Activated CD4-positive, alpha-beta T cell treated with anti-CD3 and anti-CD28 coated beads, Interleukin-2, amount 10 ng/mL, durations not matched to agents 24 days and 14 days (primary cell): ENCODE measurements at regions of chr6 and their contacts with region 1.

Region 1: DNA sequence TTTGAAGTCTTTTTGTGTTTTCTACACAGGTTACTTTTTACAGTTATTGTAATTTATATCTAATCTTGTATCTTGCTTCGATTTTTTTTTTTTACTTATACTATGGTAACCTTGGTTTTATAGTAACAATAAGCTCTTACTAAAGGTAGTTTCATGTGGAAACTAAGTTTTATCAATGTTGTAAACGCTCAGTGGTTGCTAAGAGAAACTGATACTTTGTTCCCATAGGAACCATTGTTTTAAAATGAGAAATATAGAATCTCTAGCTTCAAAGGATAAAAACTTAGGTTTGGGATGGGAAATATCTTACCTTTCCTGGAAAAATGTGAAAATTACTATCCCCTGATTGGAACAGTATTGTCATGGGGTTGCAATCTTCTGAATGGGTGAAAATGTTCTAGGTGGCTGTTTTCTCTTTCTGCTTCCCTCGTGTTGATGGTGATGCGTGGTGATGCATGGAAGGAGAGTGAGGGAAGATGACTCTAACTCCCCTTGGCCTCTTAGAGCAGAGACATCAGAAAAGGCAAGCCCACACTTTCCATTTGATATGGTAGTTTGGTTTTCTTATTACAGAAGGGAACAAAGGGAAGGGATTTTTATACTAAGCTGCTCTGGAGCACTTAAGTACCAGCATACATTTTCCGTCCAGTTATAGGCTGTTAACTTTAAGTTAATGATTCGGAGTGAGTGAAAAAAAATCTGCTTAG is 23.5 kb upstream of the BACH2 start:
- DNase-seq: no peak
- H3K4me3 Mint-ChIP-seq: no peak overlapping the region
- H3K27ac Mint-ChIP-seq: peak overlapping the region; percentile 77
- H3K4me1 Mint-ChIP-seq: peaks cover 15% of the 10 kb centered on the region
- H3K27me3 Mint-ChIP-seq: peaks cover 2% of the 10 kb centered on the region

Region 2: DNA sequence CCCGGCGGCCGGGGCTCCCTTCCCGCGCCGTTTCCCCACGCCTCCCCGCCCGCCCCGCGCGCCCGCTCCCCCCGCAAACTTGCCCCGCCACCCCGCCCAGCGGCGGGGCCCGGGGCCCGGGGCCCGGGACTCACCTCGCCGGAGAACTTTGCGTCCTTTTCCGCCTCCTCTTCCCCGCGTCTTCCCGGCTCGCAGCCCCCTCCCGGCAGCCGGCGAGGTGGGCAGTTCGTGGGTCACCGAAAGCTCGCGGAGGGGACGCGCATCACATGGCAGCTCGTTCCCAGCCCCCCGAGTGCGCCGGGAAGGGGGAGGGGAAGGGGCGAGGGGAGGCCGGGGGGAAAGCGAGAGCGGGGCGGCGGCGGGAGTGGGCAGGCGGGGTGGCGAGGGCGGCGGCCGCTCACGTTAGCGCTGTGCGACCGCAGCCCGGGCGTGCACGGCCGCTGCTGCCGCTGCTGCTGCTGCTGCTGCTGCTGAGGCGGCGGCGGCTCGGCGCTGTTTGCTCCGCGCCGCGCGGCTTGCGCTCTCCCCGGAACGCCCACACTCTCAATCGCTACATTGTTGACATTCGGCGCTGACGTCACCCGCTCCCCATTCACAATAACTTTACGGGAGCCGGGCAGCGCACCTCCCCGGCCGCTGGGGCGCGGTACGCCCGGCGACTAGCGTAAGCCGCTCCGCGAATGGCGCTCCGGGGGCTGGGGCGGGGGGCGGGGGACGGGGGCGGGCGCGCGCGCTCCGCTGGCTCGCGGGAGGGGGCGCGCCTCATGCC is 23.6 kb before region 1 on chr6 and contains the start of gene BACH2:
- intact Hi-C with region 1: loop called (anchors 1 kb)
- DNase-seq: peak; percentile 97
- H3K4me3 Mint-ChIP-seq: peak within 1 kb of the TSS; percentile 94
- H3K27ac Mint-ChIP-seq: peak within 1 kb of the TSS; percentile 95
- H3K4me1 Mint-ChIP-seq: peaks cover 40% of the 10 kb centered on the region
- H3K27me3 Mint-ChIP-seq: peaks cover 23% of the 10 kb centered on the region
- total RNA-seq, gene BACH2: 69.0 and 69.2 TPM in 2 replicates

Region 3: DNA sequence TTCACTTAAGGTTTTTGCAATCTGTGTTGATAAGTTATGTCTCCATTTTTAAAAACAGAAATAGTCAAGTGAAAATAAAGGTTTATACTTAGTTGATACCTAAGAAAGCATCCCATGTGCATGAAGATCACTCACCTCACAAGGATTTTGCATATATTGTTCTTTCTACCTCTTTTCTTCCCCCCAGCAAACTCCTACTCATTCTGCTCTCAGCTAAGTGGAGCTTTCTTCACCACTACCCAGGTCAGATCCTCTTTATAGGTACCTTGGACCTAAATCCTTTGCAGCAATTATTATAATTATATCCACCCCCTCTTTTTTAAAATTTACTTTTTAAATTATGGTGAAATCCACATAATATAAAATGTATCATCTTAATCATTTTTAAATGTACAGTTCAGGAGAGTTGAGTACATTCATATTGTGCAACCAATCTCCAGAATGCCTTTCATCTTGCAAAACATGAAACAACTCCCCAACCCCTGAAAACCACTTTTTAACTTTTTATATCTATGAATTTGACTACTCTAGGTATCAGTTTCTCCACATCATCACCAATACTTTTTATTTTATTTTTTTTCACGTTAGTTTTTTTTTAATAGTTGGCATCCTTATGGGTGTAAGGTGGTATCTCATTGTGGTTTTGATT is 14.2 kb before region 1 on chr6:
- intact Hi-C with region 1: loop called (anchors 1 kb)
- DNase-seq: no peak
- H3K4me3 Mint-ChIP-seq: no peak overlapping the region
- H3K27ac Mint-ChIP-seq: peak overlapping the region; percentile 2
- H3K4me1 Mint-ChIP-seq: peaks cover 7% of the 10 kb centered on the region
- H3K27me3 Mint-ChIP-seq: peaks cover 28% of the 10 kb centered on the region